Natural killer cell (primary cell): ENCODE measurements at regions of chr2 and their contacts with region 1.

Region 1: GRCh38 chr2:136135921-136136906 is 18.3 kb upstream of the CXCR4 start:
- DNase-seq: peak; percentile 64 to 96
- ATAC-seq: peak; percentile 61 to 87 (median 81)
- H3K4me3 ChIP-seq: no peak overlapping the region
- H3K4me3 Mint-ChIP-seq: peak overlapping the region; percentile 62
- H3K27ac ChIP-seq: peak overlapping the region; percentile 89
- H3K27ac Mint-ChIP-seq: peak overlapping the region; percentile 93 to 99
- H3K4me1 ChIP-seq: peaks cover 79% of the 10 kb centered on the region
- H3K4me1 Mint-ChIP-seq: peaks cover 71 to 74% of the 10 kb centered on the region in 2 donors
- H3K27me3 ChIP-seq: no peaks in the 10 kb centered on the region
- H3K27me3 Mint-ChIP-seq: no peaks in the 10 kb centered on the region
- CTCF ChIP-seq: no peak

Region 2: GRCh38 chr2:135985018-135985825 is 151.0 kb before region 1 on chr2 and contains the start of gene DARS1:
- intact Hi-C with region 1: loop called (anchors 1 kb)
- DNase-seq: peak; percentile 75 to 90
- ATAC-seq: peak; percentile 89 to 90 (median 89)
- H3K4me3 ChIP-seq: peak within 1 kb of the TSS; percentile 88
- H3K4me3 Mint-ChIP-seq: peak within 1 kb of the TSS; percentile 95
- H3K27ac ChIP-seq: peak within 1 kb of the TSS; percentile 97
- H3K27ac Mint-ChIP-seq: peak within 1 kb of the TSS; percentile 87 to 93
- H3K4me1 ChIP-seq: peaks cover 7% of the 10 kb centered on the region
- H3K4me1 Mint-ChIP-seq: peaks cover 24 to 29% of the 10 kb centered on the region in 2 donors
- H3K27me3 ChIP-seq: no peaks in the 10 kb centered on the region
- H3K27me3 Mint-ChIP-seq: no peaks in the 10 kb centered on the region
- CTCF ChIP-seq: no peak
- total RNA-seq, gene DARS1: 28.4 to 31.3 (median 30.3) TPM

Region 3: DNA sequence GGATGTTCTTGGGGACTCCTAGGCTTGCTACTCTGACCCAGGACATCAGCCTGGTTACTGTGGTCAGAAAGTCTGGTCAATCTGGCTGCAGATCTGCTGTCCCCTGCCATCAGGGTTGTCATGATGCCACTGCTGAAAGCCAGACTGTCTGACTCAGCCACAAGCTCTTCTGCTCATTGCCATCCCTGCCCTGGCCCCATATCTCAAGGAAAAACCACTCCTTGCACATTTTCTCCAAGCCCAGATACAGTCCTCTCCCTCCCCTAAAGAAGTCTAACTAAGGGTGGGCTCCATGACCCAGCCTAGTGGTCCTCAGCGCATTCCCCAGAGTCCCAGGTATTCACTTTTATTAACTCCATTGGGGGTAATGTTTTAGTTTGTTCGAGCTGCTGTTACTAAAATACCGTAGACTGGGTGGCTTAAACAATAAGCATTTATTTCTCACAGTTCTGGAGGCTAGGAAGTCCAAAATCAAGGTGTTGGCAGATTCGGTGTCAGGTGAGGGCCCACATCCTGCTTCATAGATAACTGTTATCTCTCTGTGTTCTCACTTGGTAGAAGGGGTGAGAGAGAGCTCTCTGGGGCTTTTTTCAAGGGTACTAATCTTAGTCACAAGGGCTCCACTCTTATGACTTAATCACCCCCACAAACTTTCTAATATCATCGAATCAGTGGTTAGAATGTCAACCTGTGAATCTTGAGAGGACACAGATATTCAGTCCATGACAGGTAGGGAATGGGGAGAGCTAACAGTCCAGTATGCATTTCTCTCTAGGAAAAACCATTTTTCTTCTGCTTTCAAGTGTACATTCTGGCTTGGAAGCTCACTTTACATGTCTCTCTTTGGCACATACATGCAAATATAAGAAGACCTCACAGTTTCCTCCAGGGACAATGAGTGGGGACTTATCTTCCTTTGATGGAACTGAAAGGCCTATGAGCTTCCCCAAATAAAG is 76.5 kb after region 1 on chr2:
- intact Hi-C with region 1: loop called (anchors 5 kb)
- DNase-seq: peak; percentile 23 to 71
- ATAC-seq: peak; percentile 66 to 86 (median 79)
- H3K4me3 ChIP-seq: no peak overlapping the region
- H3K4me3 Mint-ChIP-seq: peak overlapping the region; percentile 41
- H3K27ac ChIP-seq: peak overlapping the region; percentile 58
- H3K27ac Mint-ChIP-seq: peak overlapping the region; percentile 83
- H3K4me1 ChIP-seq: peaks cover 42% of the 10 kb centered on the region
- H3K4me1 Mint-ChIP-seq: peaks cover 31 to 40% of the 10 kb centered on the region in 2 donors
- H3K27me3 ChIP-seq: no peaks in the 10 kb centered on the region
- H3K27me3 Mint-ChIP-seq: peaks cover 3 to 17% of the 10 kb centered on the region in 2 donors
- CTCF ChIP-seq: no peak

Region 4: DNA sequence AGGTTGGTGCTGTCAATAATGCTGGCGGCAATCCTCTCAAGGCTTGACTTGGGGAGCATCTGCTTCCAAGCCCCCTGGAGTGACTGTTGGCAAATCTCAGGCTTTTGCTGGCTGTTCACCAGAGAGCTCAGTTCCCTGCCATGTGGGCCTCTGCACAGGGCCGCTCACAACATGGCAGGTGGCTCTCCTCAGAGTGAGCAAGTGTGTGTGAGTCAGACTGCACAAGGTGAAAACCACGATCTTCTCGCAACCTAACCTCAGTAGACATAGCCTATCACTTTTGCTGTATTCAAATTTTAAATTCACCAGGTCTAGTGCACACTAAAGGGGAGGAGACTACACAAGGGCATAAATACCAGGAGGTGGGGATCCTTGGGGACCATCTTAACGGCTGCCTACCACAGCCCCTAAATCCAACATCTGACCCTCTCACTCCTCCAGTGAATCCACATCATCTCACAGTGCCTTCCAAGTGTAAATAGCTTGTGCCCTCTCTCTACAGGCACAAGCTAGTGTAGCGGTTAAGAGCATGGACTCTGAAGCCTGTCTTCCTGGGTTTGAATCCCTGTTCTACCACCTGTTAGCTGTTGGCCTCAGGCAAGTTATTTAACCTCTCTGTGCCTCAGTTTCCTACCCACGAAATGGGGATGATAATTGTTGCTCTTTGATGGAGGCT is 169.4 kb after region 1 on chr2:
- intact Hi-C with region 1: loop called (anchors 5 kb)
- DNase-seq: peak; percentile 49 to 76
- ATAC-seq: peak; percentile 96 to 100 (median 98)
- H3K4me3 ChIP-seq: no peak overlapping the region
- H3K4me3 Mint-ChIP-seq: no peak overlapping the region
- H3K27ac ChIP-seq: no peak overlapping the region
- H3K27ac Mint-ChIP-seq: peak overlapping the region in 1 of 2 donors; percentile 72
- H3K4me1 ChIP-seq: peaks cover 10% of the 10 kb centered on the region
- H3K4me1 Mint-ChIP-seq: peaks cover 9 to 11% of the 10 kb centered on the region in 2 donors
- H3K27me3 ChIP-seq: no peaks in the 10 kb centered on the region
- H3K27me3 Mint-ChIP-seq: peaks cover 10 to 14% of the 10 kb centered on the region in 2 donors
- CTCF ChIP-seq: no peak

Region 5: GRCh38 chr2:136378712-136379595 is 242.7 kb after region 1 on chr2:
- intact Hi-C with region 1: loop called (anchors 2 kb)
- DNase-seq: peak; percentile 54 to 90
- ATAC-seq: peak; percentile 61 to 77 (median 76)
- H3K4me3 ChIP-seq: no peak overlapping the region
- H3K4me3 Mint-ChIP-seq: no peak overlapping the region
- H3K27ac ChIP-seq: no peak overlapping the region
- H3K27ac Mint-ChIP-seq: no peak overlapping the region
- H3K4me1 ChIP-seq: peaks cover 21% of the 10 kb centered on the region
- H3K4me1 Mint-ChIP-seq: peaks cover 7 to 26% of the 10 kb centered on the region in 2 donors
- H3K27me3 ChIP-seq: no peaks in the 10 kb centered on the region
- H3K27me3 Mint-ChIP-seq: no peaks in the 10 kb centered on the region
- CTCF ChIP-seq: peak; percentile 80

Region 6: DNA sequence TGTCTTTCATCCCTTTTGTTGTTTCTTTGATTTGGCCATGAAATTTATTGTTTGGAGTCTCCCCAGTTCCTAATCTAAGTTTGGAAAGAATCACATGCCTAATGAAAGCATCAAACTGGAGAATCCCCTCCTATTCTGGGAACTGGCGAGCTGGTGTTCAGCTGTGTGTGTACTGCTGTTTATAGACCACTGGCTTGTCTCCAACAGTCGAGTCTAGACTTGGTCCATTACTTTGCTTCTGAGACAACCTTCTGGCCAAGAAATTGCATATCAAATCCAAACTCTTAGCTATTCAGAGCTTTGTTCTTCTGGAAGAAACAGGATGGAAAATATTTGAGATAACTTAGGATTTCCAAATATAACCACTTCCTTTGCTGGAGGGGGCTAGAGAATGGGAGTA is 517.6 kb after region 1 on chr2:
- intact Hi-C with region 1: no loop called
- DNase-seq: no peak
- ATAC-seq: no peak
- H3K4me3 ChIP-seq: no peak overlapping the region
- H3K4me3 Mint-ChIP-seq: no peak overlapping the region
- H3K27ac ChIP-seq: no peak overlapping the region
- H3K27ac Mint-ChIP-seq: no peak overlapping the region
- H3K4me1 ChIP-seq: no peaks in the 10 kb centered on the region
- H3K4me1 Mint-ChIP-seq: no peaks in the 10 kb centered on the region
- H3K27me3 ChIP-seq: no peaks in the 10 kb centered on the region
- H3K27me3 Mint-ChIP-seq: peaks cover 0 to 2% of the 10 kb centered on the region in 2 donors
- CTCF ChIP-seq: no peak